ENCODE measurements at regions of chr1 and their contacts with region 1.

Region 1: GRCh38 chr1:115706587-115707425 is 61.7 kb downstream of the CASQ2 start:
- DNase-seq: peak; percentile 26
- H3K4me3 ChIP-seq: no peak overlapping the region
- H3K27ac ChIP-seq: no peak overlapping the region
- H3K27me3 ChIP-seq: peaks cover 9% of the 10 kb centered on the region
- CTCF ChIP-seq: peak; percentile 74

Region 2: GRCh38 chr1:115642168-115643072 is 64.4 kb before region 1 on chr1:
- CTCF ChIA-PET with region 1: interaction called, 35 read pairs
- POLR2A ChIA-PET with region 1: no interaction called
- DNase-seq: no peak
- H3K4me3 ChIP-seq: peak overlapping the region; percentile 82
- H3K27ac ChIP-seq: no peak overlapping the region
- H3K27me3 ChIP-seq: peaks cover 6% of the 10 kb centered on the region
- CTCF ChIP-seq: 0 out of 2 replicates have a peak, but pooled peaks have one; percentile 1

Region 3: GRCh38 chr1:115661157-115661556 is 45.6 kb before region 1 on chr1:
- CTCF ChIA-PET with region 1: interaction called, 16 read pairs
- POLR2A ChIA-PET with region 1: interaction called, 3 read pairs
- DNase-seq: no peak
- H3K4me3 ChIP-seq: no peak overlapping the region
- H3K27ac ChIP-seq: no peak overlapping the region
- H3K27me3 ChIP-seq: no peaks in the 10 kb centered on the region
- CTCF ChIP-seq: no peak

Region 4: DNA sequence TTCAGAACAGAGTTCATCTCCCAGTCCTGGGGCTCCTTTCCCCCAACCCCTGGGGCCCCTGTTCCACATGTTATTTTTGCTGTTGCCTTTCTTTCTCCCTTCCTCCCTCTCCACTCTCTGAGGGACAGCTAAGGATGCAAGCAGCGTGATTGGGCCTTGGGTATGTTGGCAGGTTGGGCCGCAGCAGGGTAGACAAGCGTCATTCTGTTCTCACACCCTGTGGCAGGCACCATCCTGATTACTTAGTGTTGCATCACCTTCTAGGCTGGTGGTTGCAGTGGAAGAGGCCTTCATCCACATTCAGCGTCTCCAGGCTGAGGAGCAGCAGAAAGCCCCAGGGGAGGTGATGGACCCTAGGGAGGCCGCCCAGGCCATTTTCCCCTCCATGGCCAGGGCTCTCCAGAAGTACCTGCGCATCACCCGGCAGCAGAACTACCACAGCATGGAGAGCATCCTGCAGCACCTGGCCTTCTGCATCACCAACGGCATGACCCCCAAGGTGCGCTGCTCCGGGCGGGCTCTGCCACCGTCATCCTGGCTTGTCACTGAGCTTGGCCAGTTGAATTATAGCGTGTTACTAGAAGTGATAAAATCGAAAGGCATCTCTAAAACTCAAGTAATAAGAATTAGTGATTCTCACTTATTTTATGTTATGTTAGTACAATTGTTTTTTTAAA is 21.6 kb before region 1 on chr1:
- CTCF ChIA-PET with region 1: interaction called, 46 read pairs
- POLR2A ChIA-PET with region 1: no interaction called
- DNase-seq: no peak
- H3K4me3 ChIP-seq: no peak overlapping the region
- H3K27ac ChIP-seq: no peak overlapping the region
- H3K27me3 ChIP-seq: no peaks in the 10 kb centered on the region
- CTCF ChIP-seq: no peak

Region 5: DNA sequence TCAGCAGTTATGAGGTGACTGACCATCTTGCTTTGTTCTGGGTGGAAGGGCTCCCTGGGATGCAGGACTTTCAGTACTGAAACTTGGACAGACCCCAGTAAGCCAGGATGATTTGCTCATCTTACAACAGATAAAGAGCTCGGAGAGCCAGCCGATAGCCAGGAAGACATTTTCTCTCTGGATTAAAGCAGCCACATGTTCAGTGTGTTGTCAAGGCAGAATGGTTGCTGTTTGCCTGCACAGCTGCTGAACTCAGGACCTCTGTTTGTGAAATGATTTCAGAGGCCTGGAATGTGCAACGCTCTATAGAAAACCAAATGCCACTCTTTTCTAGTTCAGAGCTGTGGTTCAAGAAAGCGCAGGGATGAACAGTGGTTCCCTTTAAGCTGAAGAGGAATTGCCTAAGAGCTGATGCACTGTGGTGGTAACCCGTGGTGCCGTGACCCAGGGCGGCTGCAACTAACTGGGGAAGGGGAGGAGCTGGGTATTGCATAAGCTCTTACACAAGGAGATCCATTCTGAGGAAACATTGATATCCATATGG is 21.0 kb after region 1 on chr1:
- CTCF ChIA-PET with region 1: interaction called, 27 read pairs
- POLR2A ChIA-PET with region 1: no interaction called
- DNase-seq: peak; percentile 66
- H3K4me3 ChIP-seq: no peak overlapping the region
- H3K27ac ChIP-seq: peak overlapping the region; percentile 32
- H3K27me3 ChIP-seq: no peaks in the 10 kb centered on the region
- CTCF ChIP-seq: no peak

Region 6: DNA sequence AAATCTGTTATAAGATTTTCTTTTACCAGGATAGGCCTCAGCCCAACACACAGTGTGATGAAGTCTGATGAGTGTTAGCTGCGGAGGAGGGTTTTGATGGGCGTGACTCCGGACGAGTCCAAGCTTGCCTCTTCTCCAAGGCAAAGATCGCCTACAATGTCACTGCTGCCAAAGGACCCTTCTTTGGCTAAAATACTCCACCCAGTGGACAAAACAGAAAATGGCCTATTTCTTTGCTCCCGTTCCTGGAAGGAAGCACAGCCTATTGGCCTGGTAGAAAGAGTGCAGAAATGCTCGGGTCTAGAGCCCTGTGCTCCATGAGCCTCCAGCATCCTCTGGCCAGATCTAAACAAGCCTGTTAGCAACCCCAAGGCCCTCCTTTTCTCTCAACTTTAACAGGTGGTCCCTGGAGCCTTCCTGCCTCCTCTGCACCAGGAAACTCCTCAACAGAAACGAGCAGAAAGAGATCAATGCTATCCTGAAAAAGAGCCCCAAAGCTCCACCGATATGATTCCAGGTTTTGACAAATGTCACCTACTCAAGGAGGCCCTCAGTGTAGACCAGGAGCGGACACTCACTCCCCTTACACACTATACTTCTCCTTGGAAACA is 65.1 kb after region 1 on chr1:
- CTCF ChIA-PET with region 1: interaction called, 22 read pairs
- POLR2A ChIA-PET with region 1: no interaction called
- DNase-seq: peak; percentile 54
- H3K4me3 ChIP-seq: no peak overlapping the region
- H3K27ac ChIP-seq: no peak overlapping the region
- H3K27me3 ChIP-seq: peaks cover 10% of the 10 kb centered on the region
- CTCF ChIP-seq: peak; percentile 84

Measured in AG04450 (cell line).